ENCODE measurements at regions of chr3 and their contacts with region 1.

Region 1: DNA sequence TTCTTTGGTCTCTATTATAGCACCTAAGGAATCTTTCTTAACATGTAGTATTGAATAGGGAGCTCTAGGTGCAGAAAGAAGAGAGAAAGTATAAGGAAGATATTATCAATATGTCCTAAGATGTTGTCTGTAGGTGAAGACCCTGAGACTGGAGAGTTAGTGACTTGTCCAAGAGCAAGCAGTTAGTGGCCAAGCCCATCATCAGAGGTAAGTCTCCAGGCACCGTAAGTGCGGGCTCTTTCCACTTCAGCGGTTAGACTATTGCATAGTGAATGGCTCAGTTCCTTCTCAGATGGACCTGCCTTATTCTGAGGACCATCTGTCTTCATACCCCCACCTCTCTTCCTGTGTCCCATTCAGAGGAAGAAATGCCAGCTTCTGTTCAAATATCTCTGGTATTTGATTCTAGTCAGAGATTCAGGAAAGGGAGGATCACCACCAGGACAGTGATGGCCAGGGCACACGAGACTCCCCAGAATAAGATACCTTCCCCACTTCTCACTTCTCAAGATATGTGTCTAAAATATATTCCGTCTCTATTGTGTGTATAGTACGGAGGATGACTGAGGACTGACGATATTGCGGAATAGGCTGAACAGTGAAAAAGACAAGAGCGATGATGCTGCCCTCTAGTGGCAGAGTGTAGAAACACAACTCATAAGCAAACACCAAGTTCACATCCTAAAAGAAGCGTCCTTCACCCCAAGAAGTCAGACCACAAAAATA is 19.1 kb upstream of the ADGRG7 start:
- DNase-seq: peak; percentile 81

Region 2: DNA sequence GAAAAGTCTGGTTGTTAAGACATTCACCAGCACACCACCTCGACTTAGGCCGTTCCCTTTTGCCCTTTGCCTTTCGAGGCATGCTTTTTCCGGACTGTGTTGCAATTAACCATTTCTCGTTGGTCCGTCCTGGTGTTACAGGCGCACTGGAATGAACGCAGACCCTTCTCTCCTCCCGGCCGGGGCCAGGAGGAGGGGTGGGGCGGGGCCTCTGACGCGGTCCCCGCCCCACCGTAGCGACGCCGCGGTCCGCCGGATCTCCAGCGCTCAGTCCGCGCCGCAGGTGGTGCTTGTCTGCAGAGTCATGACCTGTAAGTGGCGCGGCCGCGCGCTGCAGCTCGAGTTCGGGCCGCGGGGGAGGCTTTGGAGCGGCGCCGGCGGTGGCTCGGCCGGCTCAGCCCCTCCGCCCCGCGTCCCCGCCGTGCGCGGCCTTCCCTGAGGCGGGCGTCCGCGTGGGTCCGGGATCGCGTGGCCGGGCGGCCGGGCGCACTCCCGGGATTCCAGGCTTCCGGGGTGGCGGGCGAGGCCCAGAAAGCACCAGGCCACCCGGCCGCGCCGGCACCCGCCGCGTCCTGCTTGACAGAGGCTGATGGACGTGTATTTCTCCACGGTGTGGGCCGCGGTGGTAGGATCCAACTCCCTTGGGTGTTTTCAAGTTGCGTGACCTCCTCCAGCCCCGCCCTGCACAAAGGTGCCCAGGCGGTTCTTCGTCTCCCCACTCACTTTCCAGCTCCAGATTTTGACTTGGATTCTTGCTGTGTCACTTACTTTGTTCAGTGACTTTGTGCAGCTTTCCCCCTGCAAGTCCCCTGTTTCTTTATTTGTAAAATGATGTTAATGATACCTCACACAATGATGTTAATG is 255.6 kb before region 1 on chr3 and contains the start of gene NIT2:
- in situ Hi-C with region 1: loop called (anchors 25 kb)
- DNase-seq: peak; percentile 87
- total RNA-seq, gene NIT2: 35.4 and 41.1 TPM in 2 replicates

Region 3: GRCh38 chr3:100463002-100463401 is 127.3 kb before region 1 on chr3:
- in situ Hi-C with region 1: loop called (anchors 25 kb)
- DNase-seq: peak; percentile 35

Measured in G401 (cell line).